ENCODE measurements at regions of chr18 and their contacts with region 1.

Region 1: GRCh38 chr18:61893971-61894750 is 1.4 kb upstream of the RNF152 start:
- DNase-seq: peak; percentile 43 to 89
- H3K4me3 ChIP-seq: peak overlapping the region; percentile 93 to 95
- H3K27ac ChIP-seq: peak overlapping the region; percentile 80 to 84
- H3K4me1 ChIP-seq: peaks cover 0 to 9% of the 10 kb centered on the region in 2 donors
- H3K27me3 ChIP-seq: no peaks in the 10 kb centered on the region
- CTCF ChIP-seq: peak; percentile 30 to 70 (median 37)

Region 2: GRCh38 chr18:61581578-61582201 is 312.5 kb before region 1 on chr18:
- intact Hi-C with region 1: loop called (anchors 2 kb)
- DNase-seq: peak in 1 of 2 donors; percentile 83
- H3K4me3 ChIP-seq: peak overlapping the region; percentile 45 to 62
- H3K27ac ChIP-seq: peak overlapping the region in 1 of 2 donors; percentile 50
- H3K4me1 ChIP-seq: no peaks in the 10 kb centered on the region
- H3K27me3 ChIP-seq: no peaks in the 10 kb centered on the region
- CTCF ChIP-seq: peak; percentile 82 to 99 (median 99)

Region 3: DNA sequence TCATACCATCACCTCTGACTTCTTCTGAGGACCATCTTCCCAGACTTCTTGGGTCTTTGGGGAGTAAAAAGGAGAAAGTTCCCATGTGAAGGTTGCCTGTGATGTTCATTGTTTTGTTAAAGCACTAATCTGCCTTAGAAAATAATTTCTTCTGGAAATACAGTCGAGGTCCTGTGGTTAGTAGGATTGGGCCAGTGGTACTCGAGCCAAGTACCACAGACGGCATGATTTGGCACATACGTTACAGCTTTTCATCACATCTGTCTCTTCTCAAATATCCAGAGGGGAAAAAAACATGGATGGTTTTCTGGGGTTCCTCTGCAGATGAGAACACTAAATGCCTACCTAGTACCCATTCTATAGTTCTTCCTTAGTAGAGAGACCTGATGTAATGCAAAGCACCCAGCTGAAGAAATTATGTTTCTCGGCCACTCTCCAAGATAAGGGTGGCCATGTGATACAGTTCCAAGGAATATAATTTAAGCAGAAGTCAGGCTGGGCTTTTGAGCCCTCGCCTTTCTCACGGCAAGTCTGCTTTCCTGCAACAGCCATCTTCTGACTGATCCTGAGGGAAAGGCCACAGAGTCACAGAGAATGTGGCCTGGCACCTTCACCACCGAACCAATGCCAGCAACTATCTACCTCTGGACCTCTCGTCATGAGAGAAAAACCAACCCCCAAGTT is 162.3 kb before region 1 on chr18:
- intact Hi-C with region 1: loop called (anchors 5 kb)
- DNase-seq: no peak
- H3K4me3 ChIP-seq: no peak overlapping the region
- H3K27ac ChIP-seq: peak overlapping the region; percentile 86 to 90
- H3K4me1 ChIP-seq: peaks cover 12 to 30% of the 10 kb centered on the region in 2 donors
- H3K27me3 ChIP-seq: no peaks in the 10 kb centered on the region
- CTCF ChIP-seq: no peak

Region 4: GRCh38 chr18:61949946-61950345 is 55.8 kb after region 1 on chr18:
- intact Hi-C with region 1: loop called (anchors 2 kb)
- DNase-seq: peak in 1 of 2 donors; percentile 80
- H3K4me3 ChIP-seq: peak overlapping the region in 1 of 2 donors; percentile 49
- H3K27ac ChIP-seq: peak overlapping the region; percentile 42 to 52
- H3K4me1 ChIP-seq: peaks cover 0 to 27% of the 10 kb centered on the region in 2 donors
- H3K27me3 ChIP-seq: no peaks in the 10 kb centered on the region
- CTCF ChIP-seq: no peak

Region 5: DNA sequence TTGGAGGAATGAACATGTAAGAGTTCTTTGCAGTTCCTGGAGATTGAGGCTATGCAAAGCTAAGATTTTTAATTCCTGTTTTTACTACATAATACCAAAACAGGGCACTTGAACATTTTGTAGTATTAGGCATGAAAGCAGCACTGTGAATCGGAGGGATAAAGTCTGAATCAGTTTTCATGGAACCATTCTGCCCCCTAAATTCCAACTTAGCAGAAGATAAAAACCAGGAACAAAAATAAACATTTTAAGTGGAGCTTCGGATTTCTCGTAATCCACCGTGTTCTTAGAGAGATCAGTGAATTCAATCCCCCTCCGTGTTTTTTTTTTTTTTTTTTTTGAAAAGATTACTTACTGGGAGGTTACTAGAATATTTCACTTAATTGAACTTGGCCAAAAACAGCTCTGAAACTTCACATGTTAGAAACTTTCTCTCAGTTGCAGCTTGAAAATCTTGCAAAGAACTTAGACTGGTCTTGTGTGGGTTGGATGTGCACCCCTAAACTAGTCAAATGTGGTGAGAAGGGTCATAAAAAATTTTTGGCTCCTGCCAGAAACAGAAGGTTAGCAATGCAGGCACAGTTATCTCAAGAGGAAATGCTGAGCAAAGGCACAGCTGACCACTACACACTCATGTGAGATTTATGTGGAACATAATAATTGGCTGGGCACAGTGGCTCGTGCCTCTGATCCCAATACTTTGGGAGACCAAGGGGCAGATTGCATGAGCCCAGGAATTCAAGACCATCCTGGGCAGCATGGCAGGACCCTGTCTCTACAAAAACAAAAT is 144.0 kb after region 1 on chr18:
- intact Hi-C with region 1: loop called (anchors 5 kb)
- DNase-seq: no peak
- H3K4me3 ChIP-seq: no peak overlapping the region
- H3K27ac ChIP-seq: peak overlapping the region; percentile 20 to 40
- H3K4me1 ChIP-seq: peaks cover 0 to 8% of the 10 kb centered on the region in 2 donors
- H3K27me3 ChIP-seq: no peaks in the 10 kb centered on the region
- CTCF ChIP-seq: peak in 1 of 3 experiments; percentile 33

Region 6: GRCh38 chr18:62186774-62187542 is 292.8 kb after region 1 on chr18 and contains the starts of genes PIGN and RELCH:
- intact Hi-C with region 1: loop called (anchors 1 kb)
- DNase-seq: peak; percentile 96 to 99
- H3K4me3 ChIP-seq: peak within 1 kb of the TSS; percentile 79 to 98
- H3K27ac ChIP-seq: peak within 1 kb of the TSS; percentile 75 to 82
- H3K4me1 ChIP-seq: peaks cover 0 to 28% of the 10 kb centered on the region in 2 donors
- H3K27me3 ChIP-seq: no peaks in the 10 kb centered on the region
- CTCF ChIP-seq: no peak
- total RNA-seq, gene PIGN: 12.8 TPM
- total RNA-seq, gene RELCH: 26.4 TPM